Posterior cingulate gyrus (tissue), 11 donors: ENCODE measurements at regions of chr7 and their contacts with region 1.

Region 1: DNA sequence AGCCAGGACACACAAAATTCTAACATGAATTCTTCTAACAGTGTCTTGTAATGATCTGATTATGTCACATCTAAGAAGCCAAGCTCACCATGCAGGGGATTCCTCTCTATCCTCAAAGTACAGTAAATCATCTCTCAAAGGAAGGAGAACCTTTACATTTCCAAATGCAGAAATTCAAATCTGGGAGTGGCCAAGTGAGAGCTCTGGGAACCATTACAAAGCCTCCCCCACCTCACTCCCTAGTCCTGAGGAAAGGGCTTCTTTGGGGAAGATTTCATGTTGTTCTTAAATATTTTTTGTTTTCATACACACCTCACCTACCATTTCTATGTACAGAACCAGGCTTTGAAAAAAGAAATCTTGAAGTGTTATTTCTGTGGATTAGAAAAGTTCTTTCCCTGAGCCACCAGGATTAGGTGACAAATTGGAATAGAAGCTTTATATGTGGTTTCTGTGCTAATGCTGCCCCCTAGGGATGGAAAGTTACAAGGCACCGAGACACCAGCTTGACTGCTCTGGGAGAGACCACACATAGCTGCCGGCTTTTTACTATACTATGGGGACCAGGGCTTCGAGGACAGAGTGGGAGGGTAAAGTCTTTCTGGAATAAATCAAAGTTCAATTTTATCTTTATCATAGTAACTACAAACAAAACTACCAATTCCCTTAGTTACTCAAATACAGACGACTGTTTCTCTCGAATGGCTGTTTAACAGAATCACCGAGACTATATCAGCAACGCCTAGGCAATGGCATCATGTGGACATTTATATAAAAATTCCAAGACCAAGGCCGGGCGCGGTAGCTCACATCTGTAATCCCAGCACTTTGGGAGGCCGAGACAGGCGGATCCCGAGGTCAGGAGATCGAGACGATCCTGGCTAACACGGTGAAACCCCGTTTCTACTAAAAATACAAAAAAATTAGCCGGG is 116.1 kb downstream of the RNF216 start:
- DNase-seq: peak in 9 of 10 donors; percentile 46 to 93 (median 77)

Region 2: DNA sequence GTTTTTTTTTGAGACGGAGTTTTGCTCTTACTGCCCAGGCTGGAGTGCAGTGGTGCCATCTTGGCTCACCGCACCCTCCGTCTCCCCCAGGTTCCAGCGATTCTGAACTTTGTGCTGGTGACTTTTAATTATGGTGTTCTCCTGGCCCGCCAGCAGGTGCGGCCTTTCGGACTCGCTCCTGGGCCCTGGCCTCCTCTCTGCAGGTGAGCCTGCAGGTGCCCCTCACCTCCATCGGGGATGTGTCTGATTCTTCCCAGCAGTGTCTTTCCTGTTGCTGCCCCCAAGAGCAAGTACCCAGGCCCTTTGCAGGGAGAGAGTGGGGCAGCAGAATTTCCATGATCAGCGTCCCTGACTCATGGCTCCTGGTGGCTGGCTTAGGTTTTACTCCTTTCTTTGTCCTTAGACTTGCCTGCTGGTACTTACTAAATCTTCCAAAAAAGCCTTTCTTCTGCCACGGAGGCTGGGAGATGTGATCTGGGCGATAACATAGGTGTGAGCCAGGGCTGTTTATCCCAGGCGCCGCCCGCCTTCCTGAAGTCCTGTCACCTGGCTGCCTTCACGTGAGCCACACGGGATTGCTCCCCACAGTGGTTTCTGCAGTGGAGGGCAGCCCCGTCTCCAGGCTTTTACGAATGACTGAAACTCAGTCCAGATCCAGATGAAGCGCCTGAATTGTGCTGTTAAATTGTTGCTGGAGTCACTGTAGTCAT is 464.6 kb before region 1 on chr7:
- intact Hi-C with region 1: no loop called
- DNase-seq: no peak

Region 3: DNA sequence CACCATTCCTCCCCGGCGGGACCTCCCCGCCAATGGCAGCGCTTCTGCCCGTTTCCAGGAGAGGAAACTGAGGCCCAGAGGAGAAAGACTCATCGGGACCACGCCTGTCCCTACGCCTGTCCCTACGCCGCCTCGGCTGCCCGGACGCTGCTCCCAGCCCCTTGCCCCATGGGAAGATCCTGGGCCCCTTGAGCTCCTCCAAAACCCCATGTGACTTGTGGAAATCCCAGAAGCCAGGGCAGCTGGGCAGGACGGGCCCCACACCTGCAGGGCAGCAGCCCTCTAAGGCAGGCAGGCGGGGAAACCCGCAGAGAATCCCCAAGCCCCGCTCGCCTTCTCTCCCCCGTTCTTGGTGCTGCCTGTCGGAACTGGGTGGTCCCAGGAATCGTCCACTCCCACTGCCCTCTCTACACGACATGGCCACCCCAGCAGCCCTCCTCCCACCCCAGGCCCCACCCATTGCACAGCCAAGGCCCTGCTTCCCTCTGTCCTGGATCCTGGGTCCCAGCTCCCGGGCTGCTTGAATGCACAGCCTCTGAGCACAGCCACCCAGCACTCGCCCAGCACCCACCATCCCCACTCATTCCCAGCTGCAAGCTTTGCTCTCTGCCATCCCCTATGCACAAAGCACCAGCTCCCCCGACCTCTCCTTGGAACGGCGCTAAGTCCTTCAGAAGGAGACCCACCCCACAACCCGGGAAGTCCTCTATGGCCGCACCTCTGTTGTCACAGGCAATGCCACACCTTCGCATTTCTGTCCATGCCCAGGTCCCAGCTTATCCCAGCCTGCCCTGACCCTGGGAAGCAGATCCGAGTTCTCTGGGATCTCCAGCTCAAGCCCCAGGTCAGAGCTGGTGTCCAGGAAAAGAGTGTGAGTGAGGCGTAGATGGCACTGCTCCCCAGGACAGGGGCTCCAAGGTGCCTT is 332.0 kb before region 1 on chr7:
- intact Hi-C with region 1: no loop called
- DNase-seq: no peak

Region 4: DNA sequence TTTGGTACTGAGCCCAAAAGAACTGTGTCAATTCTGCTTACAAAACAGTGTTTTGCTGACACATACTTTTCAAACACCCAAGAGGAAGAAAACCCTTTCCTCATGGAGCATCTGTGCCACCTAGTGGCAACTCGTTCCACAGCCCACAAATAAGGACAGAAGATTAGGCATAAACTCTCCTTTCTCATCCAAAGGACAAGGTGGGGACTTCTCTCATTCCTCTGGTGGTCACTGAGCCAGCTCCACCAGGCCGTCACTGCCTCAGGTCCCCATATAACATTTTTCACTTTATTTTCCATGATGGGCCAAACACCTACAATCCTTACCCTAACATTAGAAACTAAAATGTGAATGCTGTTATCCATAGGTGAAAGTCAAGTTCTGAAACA is 39.2 kb after region 1 on chr7:
- intact Hi-C with region 1: loop called (anchors 5 kb)
- DNase-seq: peak in 9 of 10 donors; percentile 45 to 95 (median 83)